ENCODE measurements at regions of chr9 and their contacts with region 1.

Region 1: GRCh38 chr9:128927731-128928411 is 7.1 kb downstream of the PHYHD1 start:
- DNase-seq: no peak
- ATAC-seq: peak; percentile 79

Region 2: DNA sequence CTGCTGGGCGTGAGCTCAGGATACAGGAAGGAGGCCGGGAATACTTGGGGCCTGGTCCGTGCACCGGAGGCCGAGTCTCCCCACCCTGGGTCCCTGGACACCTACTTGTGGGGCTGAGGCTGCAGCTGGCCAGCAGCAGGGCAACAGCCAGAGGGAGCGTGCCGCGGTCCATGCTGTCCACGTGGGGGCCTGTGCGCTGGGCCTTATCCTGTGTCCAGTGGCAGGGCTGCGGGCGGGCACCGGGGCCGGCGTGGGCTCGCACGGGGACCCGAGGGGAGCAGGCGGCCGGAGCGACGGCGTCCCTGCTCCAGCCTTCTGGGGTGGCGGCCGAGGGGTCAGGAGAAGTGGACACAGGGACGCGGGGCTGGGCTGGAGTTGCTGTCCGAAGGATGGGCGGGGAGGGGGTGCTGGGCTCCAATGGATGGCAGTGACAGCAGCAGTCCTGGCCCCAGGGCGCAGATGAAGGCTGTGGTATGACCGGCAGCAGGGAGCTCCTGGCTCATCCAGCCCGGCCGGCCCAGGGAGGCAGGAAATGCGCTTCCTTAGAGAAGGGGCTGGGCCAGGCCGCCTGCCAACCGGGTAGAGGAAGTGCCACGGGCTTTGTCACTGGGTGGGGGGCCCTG is 1073.6 kb before region 1 on chr9 and contains the start of gene ENG:
- intact Hi-C with region 1: no loop called
- DNase-seq: peak; percentile 90
- ATAC-seq: peak; percentile 69
- total RNA-seq, gene ENG: 131 TPM

Region 3: DNA sequence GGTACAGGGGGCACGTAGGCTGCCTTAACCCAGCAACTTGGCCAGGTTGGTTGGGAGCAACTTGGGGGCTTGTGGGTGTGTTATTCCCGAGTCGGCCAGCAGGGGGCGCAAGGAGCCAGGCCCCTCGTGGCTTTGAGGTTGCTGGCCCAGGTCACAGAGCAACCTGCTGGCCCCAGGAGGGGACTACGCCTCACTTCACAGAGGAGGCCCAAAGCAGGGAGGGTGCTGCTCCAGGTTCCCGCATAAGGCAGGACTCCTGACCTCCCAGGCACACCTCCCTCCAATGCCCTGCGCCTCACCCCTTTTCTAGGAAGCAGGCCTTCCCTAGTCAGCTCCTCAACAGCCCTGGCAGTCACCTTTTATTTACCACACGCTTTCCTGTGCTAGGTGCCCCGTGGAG is 64.2 kb before region 1 on chr9:
- intact Hi-C with region 1: loop called (anchors 1 kb)
- DNase-seq: peak; percentile 88
- ATAC-seq: peak; percentile 73

Region 4: GRCh38 chr9:129006328-129007034 is 78.6 kb after region 1 on chr9:
- intact Hi-C with region 1: no loop called
- DNase-seq: no peak
- ATAC-seq: peak; percentile 85